CD8-positive, alpha-beta memory T cell (primary cell): ENCODE measurements at regions of chr17 and their contacts with region 1.

Region 1: GRCh38 chr17:27892866-27893769 is at the start of gene LYRM9:
- DNase-seq: peak; percentile 92 to 94 (median 93)
- H3K4me3 ChIP-seq: peak within 1 kb of the TSS; percentile 73
- H3K4me3 Mint-ChIP-seq: peak within 1 kb of the TSS; percentile 79 to 93 (median 86)
- H3K27ac ChIP-seq: peak within 1 kb of the TSS; percentile 58
- H3K27ac Mint-ChIP-seq: peak within 1 kb of the TSS; percentile 26 to 86 (median 76)
- H3K4me1 ChIP-seq: no peaks in the 10 kb centered on the region
- H3K4me1 Mint-ChIP-seq: peaks cover 17 to 24% (median 23%) of the 10 kb centered on the region in 3 donors
- H3K27me3 ChIP-seq: peaks cover 4% of the 10 kb centered on the region
- H3K27me3 Mint-ChIP-seq: peaks cover 14 to 28% of the 10 kb centered on the region in 2 donors
- total RNA-seq, gene LYRM9: 2.5 to 3.4 TPM

Region 2: GRCh38 chr17:27721797-27722196 is 171.3 kb before region 1 on chr17:
- CTCF ChIA-PET with region 1: no interaction called
- POLR2A ChIA-PET with region 1: no interaction called
- DNase-seq: no peak
- H3K4me3 ChIP-seq: no peak overlapping the region
- H3K4me3 Mint-ChIP-seq: no peak overlapping the region
- H3K27ac ChIP-seq: no peak overlapping the region
- H3K27ac Mint-ChIP-seq: no peak overlapping the region
- H3K4me1 ChIP-seq: no peaks in the 10 kb centered on the region
- H3K4me1 Mint-ChIP-seq: no peaks in the 10 kb centered on the region
- H3K27me3 ChIP-seq: no peaks in the 10 kb centered on the region
- H3K27me3 Mint-ChIP-seq: peaks cover 4 to 26% of the 10 kb centered on the region in 2 donors

Region 3: GRCh38 chr17:27834571-27834970 is 58.5 kb before region 1 on chr17:
- CTCF ChIA-PET with region 1: no interaction called
- POLR2A ChIA-PET with region 1: no interaction called
- DNase-seq: no peak
- H3K4me3 ChIP-seq: no peak overlapping the region
- H3K4me3 Mint-ChIP-seq: no peak overlapping the region
- H3K27ac ChIP-seq: no peak overlapping the region
- H3K27ac Mint-ChIP-seq: no peak overlapping the region
- H3K4me1 ChIP-seq: no peaks in the 10 kb centered on the region
- H3K4me1 Mint-ChIP-seq: no peaks in the 10 kb centered on the region
- H3K27me3 ChIP-seq: no peaks in the 10 kb centered on the region
- H3K27me3 Mint-ChIP-seq: no peaks in the 10 kb centered on the region

Region 4: GRCh38 chr17:27846042-27846655 is 47.0 kb before region 1 on chr17:
- CTCF ChIA-PET with region 1: interaction called, 3 read pairs
- POLR2A ChIA-PET with region 1: interaction called, 12 read pairs
- DNase-seq: peak in 4 of 5 donors; percentile 26 to 61 (median 52)
- H3K4me3 ChIP-seq: no peak overlapping the region
- H3K4me3 Mint-ChIP-seq: peak overlapping the region; percentile 61 to 85 (median 82)
- H3K27ac ChIP-seq: no peak overlapping the region
- H3K27ac Mint-ChIP-seq: peak overlapping the region; percentile 84 to 95 (median 90)
- H3K4me1 ChIP-seq: peaks cover 5% of the 10 kb centered on the region
- H3K4me1 Mint-ChIP-seq: peaks cover 26 to 30% (median 29%) of the 10 kb centered on the region in 3 donors
- H3K27me3 ChIP-seq: no peaks in the 10 kb centered on the region
- H3K27me3 Mint-ChIP-seq: peaks cover 0 to 3% of the 10 kb centered on the region in 2 donors